ENCODE measurements at regions of chr21 and their contacts with region 1.

Region 1: GRCh38 chr21:34614633-34615486 is at the start of gene RCAN1:
- DNase-seq: peak; percentile 92
- H3K4me3 Mint-ChIP-seq: peak within 1 kb of the TSS; percentile 79
- H3K27ac Mint-ChIP-seq: peak within 1 kb of the TSS; percentile 69
- H3K4me1 Mint-ChIP-seq: peaks cover 15% of the 10 kb centered on the region
- H3K27me3 Mint-ChIP-seq: no peaks in the 10 kb centered on the region
- total RNA-seq, gene RCAN1: 8.6 to 9.7 TPM

Region 2: DNA sequence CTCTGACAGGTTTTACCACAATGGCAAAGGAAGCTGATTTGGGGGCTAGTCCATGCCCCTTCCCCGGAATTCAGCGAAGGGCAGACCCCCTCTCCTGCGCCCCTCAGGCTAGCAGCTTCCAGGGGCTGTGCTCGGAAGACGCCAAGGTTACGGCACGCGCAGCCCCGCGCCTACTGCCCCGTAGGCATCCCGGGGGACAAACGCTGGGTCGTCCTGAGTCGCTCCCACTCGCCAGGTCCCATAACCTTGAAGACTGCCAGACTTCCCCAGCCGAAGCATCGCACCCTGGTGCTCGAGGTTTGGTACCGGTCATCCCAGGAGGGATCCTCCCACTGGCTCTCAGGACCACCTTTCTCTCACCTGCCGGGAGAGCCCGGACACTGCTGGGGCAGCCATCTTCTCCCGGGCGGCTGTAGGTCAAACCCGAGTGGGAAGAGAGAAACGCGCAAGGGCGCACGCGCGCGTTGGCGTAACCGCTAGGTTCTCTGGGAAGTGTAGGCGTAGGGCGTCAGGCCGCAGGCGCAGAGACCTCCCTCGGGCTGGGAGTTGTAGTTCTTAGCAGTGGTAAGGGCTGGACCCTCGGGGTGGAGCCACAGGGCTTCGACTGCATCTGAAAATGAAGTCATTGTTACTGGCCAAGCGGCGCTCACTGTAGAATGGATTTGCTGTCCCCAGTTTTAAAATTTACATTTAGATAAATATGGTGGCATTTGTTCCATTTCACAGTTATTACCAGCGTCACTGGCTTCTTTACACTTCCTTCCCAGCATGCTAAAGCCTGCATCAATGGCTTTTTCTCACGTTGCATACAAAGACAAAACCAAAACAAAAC is 699.3 kb before region 1 on chr21 and contains the start of gene ATP5PO:
- CTCF ChIA-PET with region 1: no interaction called
- POLR2A ChIA-PET with region 1: no interaction called
- intact Hi-C with region 1: loop called (anchors 5 kb)
- DNase-seq: peak; percentile 98
- H3K4me3 Mint-ChIP-seq: peak within 1 kb of the TSS; percentile 99
- H3K27ac Mint-ChIP-seq: peak within 1 kb of the TSS; percentile 93
- H3K4me1 Mint-ChIP-seq: peaks cover 28% of the 10 kb centered on the region
- H3K27me3 Mint-ChIP-seq: no peaks in the 10 kb centered on the region
- total RNA-seq, gene ATP5PO: 208 to 210 TPM

Region 3: DNA sequence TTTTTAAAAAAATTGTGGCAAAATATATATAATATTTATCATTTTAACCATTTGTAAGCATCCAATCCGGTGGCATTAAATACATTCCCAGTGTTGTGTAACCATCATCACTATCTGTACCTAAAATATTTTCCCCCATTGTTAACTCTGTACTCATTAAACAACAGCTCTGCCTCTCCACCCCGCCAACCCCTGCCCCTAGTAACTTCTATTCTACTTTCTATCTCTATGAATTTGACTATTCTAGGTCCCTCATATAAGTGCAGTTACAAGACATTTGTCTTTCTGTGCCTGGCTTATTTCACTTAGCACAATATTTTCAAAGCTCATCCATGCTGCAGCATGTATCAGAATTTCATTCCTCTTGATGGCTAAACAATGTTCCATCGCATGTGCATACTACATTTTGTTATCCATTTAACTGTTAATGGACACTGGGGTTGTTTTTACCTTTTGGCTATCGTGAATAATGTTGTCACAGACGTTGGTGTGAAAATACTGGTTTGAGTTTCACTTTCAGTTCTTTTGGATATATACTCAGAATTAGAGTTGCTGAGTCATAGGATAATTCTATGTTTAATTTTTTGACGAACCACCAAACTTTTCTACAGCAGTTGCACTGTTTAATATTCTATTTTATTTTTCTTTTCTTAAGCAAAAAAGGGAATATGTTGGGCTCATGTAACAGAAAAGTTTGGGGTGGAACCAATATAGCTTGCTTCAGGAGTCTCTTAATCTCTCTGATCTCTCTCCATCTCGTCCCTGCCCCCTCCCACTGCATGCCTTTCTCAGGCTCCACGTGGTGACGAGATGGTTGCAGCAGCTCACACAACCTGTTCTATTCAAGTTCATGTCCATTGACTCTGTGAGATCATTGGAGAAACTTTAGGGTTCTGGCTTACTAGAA is 25.3 kb after region 1 on chr21:
- CTCF ChIA-PET with region 1: interaction called, 3 read pairs
- POLR2A ChIA-PET with region 1: no interaction called
- intact Hi-C with region 1: loop called (anchors 1 kb)
- DNase-seq: peak; percentile 50
- H3K4me3 Mint-ChIP-seq: peak overlapping the region; percentile 51
- H3K27ac Mint-ChIP-seq: peak overlapping the region; percentile 70
- H3K4me1 Mint-ChIP-seq: peaks cover 25% of the 10 kb centered on the region
- H3K27me3 Mint-ChIP-seq: no peaks in the 10 kb centered on the region